Tibial artery (tissue), 4 donors: ENCODE measurements at regions of chr6 and their contacts with region 1.

Region 1: DNA sequence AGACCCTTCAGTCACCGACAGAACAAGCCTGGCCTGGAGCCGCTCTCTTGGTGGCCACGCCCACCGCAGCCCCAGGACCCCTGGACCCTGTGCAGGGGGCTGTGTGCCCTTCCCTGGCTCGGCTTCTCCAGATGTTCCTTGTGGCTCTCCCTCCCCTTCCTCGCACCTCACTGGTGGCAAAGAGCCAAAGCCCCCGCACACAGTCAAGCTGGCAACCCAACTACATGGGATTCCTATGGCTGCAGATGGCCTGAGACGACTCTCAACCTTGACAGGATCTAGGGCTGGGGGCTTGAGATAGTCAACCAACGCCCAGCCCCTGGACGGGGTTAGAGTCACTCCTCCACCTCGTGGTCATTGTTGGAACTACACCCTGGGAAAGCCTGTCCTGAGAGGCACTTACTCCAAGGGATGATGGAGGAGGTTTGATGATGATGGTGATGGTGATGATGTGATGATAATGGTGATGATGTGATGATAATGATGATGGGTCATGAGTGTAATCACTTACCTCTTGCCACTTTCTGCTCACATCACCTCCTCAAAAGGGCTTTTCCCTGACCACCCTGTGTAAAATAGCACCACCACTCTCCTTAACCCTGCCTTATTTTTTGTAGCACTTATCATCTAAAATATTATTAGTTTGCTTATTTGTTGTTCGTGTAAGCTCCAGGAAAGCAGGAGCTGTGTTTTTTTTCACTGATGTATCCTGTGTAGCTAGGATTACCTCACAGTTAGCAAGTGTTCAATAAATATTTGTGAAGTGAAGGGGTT is 278.4 kb downstream of the LRFN2 start:
- DNase-seq: peak in 1 of 2 donors; percentile 51
- H3K4me3 ChIP-seq: no peak overlapping the region
- H3K27ac ChIP-seq: no peak overlapping the region
- H3K4me1 ChIP-seq: peaks cover 0 to 4% (median 2%) of the 10 kb centered on the region in 4 donors
- H3K27me3 ChIP-seq: peaks cover 0 to 14% of the 10 kb centered on the region in 2 donors
- CTCF ChIP-seq: peak; percentile 79 to 84

Region 2: GRCh38 chr6:39892490-39893129 is 416.1 kb before region 1 on chr6:
- intact Hi-C with region 1: no loop called
- DNase-seq: peak; percentile 70 to 88
- H3K4me3 ChIP-seq: no peak overlapping the region
- H3K27ac ChIP-seq: peak overlapping the region; percentile 58 to 69
- H3K4me1 ChIP-seq: peaks cover 0 to 56% (median 26%) of the 10 kb centered on the region in 4 donors
- H3K27me3 ChIP-seq: no peaks in the 10 kb centered on the region
- CTCF ChIP-seq: peak; percentile 73 to 84

Region 3: DNA sequence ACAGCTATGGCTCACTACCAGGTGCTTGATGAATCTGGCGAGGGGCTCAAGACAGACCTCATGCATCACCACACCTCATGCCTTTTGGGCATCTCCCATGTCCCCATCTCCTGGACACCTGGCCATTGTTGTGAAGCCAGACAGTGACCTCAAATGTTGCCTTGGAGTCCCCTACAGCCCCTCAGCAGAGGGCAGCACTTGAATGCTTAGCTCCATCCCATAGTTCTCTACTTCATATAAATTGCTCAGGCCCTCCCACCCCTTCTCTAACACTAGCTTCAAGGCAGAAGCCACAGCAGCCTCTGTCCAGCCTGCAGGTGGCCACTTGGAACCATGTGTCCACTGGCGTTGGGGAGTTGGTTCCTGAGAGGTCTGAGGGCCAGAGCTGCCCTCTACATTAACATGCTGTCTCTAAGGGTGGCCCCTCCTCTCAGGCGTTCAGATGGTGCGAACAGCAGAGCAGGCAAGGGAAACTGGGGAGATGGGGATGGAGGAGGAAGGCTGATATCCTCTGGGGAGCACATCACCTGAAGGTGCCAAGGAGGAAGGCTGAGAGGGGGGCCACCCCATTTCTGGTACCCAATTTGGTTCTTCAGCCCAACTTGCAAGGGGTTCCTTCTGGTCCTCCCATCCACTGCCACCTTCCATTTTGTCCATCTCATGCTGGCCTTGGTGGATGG is 405.8 kb before region 1 on chr6:
- intact Hi-C with region 1: loop called (anchors 10 kb)
- DNase-seq: peak in 1 of 2 donors; percentile 62
- H3K4me3 ChIP-seq: no peak overlapping the region
- H3K27ac ChIP-seq: peak overlapping the region in 1 of 2 donors; percentile 31
- H3K4me1 ChIP-seq: peaks cover 0 to 11% (median 5%) of the 10 kb centered on the region in 4 donors
- H3K27me3 ChIP-seq: no peaks in the 10 kb centered on the region
- CTCF ChIP-seq: no peak

Region 4: DNA sequence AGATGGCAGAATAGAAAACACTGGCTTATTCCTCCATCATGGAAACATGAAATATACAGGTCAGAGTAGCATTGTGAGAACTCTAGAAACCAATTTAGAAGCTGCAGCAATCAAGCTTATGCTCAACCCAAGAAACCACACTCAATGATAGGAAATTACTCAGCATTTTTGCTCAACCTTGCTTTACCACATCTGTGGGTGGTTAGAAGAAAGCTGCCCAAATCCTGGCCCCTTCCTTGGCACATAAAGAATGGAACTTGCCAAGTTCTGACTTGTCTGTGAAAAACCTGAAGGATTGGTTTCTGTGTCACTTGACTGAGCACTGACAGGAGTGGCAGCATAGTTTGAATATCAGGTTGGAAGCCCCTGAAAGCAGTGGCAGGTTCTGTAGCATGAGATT is 266.5 kb before region 1 on chr6:
- intact Hi-C with region 1: no loop called
- DNase-seq: no peak
- H3K4me3 ChIP-seq: no peak overlapping the region
- H3K27ac ChIP-seq: no peak overlapping the region
- H3K4me1 ChIP-seq: no peaks in the 10 kb centered on the region
- H3K27me3 ChIP-seq: peaks cover 0 to 5% of the 10 kb centered on the region in 2 donors
- CTCF ChIP-seq: no peak

Region 5: GRCh38 chr6:41439524-41440418 is 1131.1 kb after region 1 on chr6:
- intact Hi-C with region 1: no loop called
- DNase-seq: no peak
- H3K4me3 ChIP-seq: no peak overlapping the region
- H3K27ac ChIP-seq: no peak overlapping the region
- H3K4me1 ChIP-seq: peaks cover 0 to 21% (median 18%) of the 10 kb centered on the region in 4 donors
- H3K27me3 ChIP-seq: peaks cover 0 to 3% of the 10 kb centered on the region in 2 donors
- CTCF ChIP-seq: no peak